Activated CD4-positive, alpha-beta memory T cell treated with anti-CD3 and anti-CD28 coated beads for 36 hours (primary cell): ENCODE measurements at regions of chr4 and their contacts with region 1.

Region 1: DNA sequence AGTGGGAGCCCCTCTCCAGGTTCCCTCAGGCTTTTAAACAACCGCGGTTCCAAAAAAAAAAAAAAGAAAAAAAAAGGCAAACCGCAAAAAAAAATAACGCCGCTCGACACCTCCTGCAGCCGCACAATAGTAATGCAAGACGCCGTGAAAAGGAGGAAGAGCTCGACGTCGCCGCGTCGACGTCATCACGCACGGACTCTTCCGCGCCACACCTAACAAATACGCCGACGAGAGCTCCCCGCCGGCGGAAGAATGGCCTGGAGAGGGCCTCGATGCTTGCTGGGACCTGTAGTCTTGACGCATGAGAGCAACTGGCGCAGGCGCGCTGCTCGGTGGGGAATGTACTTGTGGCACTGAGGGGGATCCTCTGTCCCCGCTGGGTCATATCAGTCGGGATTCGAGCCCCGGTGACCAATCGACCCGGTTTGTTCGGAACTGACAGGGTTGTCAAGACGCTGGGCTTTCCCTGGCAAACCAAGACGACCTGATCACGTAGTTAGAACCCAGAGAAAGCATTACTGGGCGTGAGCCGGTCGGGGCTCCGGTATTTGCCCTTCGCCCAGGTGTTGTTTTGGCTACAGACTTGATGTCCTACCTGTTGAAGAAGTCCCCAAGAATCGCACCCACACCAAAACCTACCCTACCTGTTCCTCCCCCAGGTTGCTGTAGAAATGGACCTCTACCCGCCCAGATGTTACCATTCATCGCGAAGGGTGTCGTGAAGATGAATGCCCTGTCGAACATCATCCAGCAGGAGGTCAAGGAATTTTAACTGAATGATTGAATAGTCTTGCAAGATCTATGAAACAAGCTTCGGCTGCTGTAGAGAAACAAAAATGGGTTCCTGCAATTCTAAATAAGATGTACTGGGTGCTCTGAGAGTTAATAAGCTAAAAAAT is at the start of gene CBR4:
- DNase-seq: peak; percentile 97
- H3K4me3 Mint-ChIP-seq: peak within 1 kb of the TSS; percentile 92
- H3K27ac Mint-ChIP-seq: peak within 1 kb of the TSS; percentile 86
- H3K4me1 Mint-ChIP-seq: peaks cover 20% of the 10 kb centered on the region
- H3K27me3 Mint-ChIP-seq: no peaks in the 10 kb centered on the region
- total RNA-seq, gene CBR4: 18.0 to 19.7 TPM

Region 2: DNA sequence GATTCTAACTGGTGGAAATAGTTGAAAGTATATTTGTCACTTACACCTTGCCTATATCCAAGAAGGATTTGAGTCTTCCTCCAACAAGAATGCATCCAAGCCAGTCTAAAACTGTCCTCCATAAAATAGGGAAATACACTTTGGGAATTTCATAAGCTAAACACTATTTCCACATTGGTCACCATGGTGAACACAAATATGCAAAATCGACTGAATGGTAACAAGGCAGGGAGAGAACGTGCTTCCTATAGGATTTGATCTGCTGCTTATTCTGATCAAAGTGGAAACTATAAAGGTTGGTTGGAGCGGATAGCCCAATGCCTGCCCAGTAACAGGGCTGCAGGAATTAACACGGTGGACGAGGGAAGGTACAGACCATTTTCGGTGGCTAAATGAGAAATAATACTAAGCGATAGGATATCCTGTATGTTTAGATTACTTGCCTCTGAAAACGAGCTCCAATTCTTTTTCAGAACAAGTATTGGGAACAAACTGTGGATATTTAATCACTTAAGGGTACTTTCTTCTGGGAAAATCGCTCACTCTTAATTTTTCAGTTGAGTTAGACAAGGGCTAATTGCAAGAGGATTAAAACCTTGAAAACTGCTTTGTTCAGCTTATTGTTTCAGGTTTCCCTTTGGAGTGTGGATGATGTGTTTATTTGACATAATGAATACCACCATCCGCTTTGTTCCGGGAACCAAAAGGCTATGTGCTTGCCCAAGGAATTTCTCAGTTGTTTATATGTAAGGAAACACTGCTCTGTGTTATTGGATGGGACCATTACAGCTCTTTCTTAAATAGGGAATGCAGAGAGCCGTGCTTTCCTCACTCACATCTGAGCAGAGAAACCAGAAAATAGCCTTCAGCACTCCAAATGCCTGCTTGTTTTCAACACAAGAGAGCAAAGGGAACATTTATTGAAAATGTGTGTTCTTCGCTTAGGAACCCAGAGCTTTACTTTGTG is 194.7 kb before region 1 on chr4:
- CTCF ChIA-PET with region 1: no interaction called
- POLR2A ChIA-PET with region 1: no interaction called
- intact Hi-C with region 1: no loop called
- DNase-seq: no peak
- H3K4me3 Mint-ChIP-seq: no peak overlapping the region
- H3K27ac Mint-ChIP-seq: no peak overlapping the region
- H3K4me1 Mint-ChIP-seq: peaks cover 10% of the 10 kb centered on the region
- H3K27me3 Mint-ChIP-seq: peaks cover 41% of the 10 kb centered on the region

Region 3: GRCh38 chr4:168886351-168886750 is 124.0 kb before region 1 on chr4:
- CTCF ChIA-PET with region 1: no interaction called
- POLR2A ChIA-PET with region 1: no interaction called
- intact Hi-C with region 1: no loop called
- DNase-seq: no peak
- H3K4me3 Mint-ChIP-seq: no peak overlapping the region
- H3K27ac Mint-ChIP-seq: no peak overlapping the region
- H3K4me1 Mint-ChIP-seq: no peaks in the 10 kb centered on the region
- H3K27me3 Mint-ChIP-seq: peaks cover 4% of the 10 kb centered on the region

Region 4: GRCh38 chr4:168923526-168924194 is 86.7 kb before region 1 on chr4:
- CTCF ChIA-PET with region 1: interaction called, 16 read pairs
- POLR2A ChIA-PET with region 1: no interaction called
- intact Hi-C with region 1: loop called (anchors 1 kb)
- DNase-seq: peak; percentile 52
- H3K4me3 Mint-ChIP-seq: no peak overlapping the region
- H3K27ac Mint-ChIP-seq: no peak overlapping the region
- H3K4me1 Mint-ChIP-seq: no peaks in the 10 kb centered on the region
- H3K27me3 Mint-ChIP-seq: no peaks in the 10 kb centered on the region

Region 5: DNA sequence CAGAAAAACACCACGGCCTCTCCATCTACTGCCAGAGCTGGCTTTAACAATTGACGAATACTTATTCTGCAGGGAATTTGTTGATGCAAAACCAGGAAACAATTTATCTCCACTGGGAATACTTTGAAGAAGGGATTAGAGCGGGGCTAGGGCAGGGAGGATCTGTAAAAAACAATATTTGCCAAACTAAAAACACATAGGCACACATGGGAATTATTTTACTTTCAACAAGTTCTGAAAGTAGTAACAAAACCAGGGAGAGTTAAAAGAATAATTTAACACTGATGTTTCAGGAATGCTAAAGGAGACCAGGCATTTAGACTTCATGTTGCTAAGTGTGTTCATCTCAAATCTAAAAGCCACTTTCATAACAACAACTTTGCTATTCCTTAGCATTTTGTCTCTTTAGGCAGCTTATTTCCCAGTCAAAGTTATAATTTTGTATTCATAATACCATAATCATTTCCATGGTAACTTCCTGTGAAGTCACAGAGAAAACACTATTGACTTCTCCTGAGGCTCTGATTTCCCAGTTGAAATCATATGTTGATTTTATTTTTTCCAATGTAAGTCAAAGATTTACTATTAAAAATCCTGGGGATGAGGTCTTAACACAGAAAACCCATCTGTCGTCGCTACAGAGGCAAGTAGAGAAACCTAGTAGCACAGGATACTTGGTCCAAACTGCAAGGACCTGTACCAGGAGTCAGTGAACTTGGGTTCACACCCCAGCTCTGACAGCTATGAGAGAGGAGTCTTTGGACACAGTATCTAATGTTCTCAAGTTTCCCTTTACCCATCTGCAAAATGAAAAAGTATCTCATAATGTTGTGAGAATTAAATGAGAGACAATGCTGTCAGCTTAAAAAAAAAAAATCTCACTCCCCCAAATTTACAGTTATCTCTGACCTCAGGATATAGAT is 191.1 kb after region 1 on chr4:
- CTCF ChIA-PET with region 1: no interaction called
- POLR2A ChIA-PET with region 1: no interaction called
- intact Hi-C with region 1: no loop called
- DNase-seq: no peak
- H3K4me3 Mint-ChIP-seq: no peak overlapping the region
- H3K27ac Mint-ChIP-seq: no peak overlapping the region
- H3K4me1 Mint-ChIP-seq: no peaks in the 10 kb centered on the region
- H3K27me3 Mint-ChIP-seq: no peaks in the 10 kb centered on the region

Region 6: GRCh38 chr4:169410839-169411770 is 400.7 kb after region 1 on chr4:
- CTCF ChIA-PET with region 1: no interaction called
- POLR2A ChIA-PET with region 1: no interaction called
- intact Hi-C with region 1: loop called (anchors 10 kb)
- DNase-seq: peak; percentile 76
- H3K4me3 Mint-ChIP-seq: no peak overlapping the region
- H3K27ac Mint-ChIP-seq: peak overlapping the region; percentile 58
- H3K4me1 Mint-ChIP-seq: peaks cover 24% of the 10 kb centered on the region
- H3K27me3 Mint-ChIP-seq: no peaks in the 10 kb centered on the region

Region 7: DNA sequence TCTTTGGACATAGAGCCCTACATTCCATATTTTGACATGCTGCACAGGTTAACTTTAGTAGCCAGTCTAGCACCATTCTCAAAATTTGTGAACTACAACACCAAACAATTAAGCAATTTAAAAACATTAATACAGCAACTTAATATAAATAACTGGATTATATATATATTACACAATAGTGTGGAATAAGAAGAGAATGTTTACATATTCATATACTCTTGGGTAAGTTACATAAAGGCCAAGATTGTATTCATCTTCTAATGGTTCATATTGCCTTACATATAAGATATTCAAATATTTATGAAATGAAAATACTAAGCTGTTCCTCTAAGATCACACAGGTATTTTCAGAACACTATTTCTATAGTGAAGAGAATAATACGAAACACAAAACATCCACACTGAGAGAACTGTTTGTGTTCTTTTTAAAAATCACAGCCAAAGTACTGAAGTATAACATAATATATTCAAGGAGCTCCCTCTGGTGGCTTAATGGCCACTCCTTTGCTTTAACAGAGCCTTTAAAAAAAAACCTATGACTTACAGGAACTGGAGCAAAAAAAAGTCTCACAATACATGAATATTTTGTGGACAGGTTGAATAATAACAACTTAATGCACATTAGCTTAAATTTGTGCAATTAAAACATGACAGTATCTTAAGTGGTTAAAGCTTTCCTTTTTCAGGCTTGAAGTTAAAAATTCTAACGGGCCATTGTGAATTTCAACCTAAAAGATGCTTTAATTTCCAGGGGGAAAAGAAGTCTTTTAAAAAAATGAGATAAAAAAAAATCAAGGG is 555.8 kb after region 1 on chr4:
- CTCF ChIA-PET with region 1: no interaction called
- POLR2A ChIA-PET with region 1: no interaction called
- intact Hi-C with region 1: loop called (anchors 10 kb)
- DNase-seq: no peak
- H3K4me3 Mint-ChIP-seq: no peak overlapping the region
- H3K27ac Mint-ChIP-seq: no peak overlapping the region
- H3K4me1 Mint-ChIP-seq: peaks cover 5% of the 10 kb centered on the region
- H3K27me3 Mint-ChIP-seq: no peaks in the 10 kb centered on the region

Region 8: GRCh38 chr4:170027181-170027829 is 1016.9 kb after region 1 on chr4:
- CTCF ChIA-PET with region 1: no interaction called
- POLR2A ChIA-PET with region 1: no interaction called
- intact Hi-C with region 1: loop called (anchors 1 kb)
- DNase-seq: peak; percentile 93
- H3K4me3 Mint-ChIP-seq: peak overlapping the region; percentile 79
- H3K27ac Mint-ChIP-seq: peak overlapping the region; percentile 71
- H3K4me1 Mint-ChIP-seq: peaks cover 9% of the 10 kb centered on the region
- H3K27me3 Mint-ChIP-seq: peaks cover 16% of the 10 kb centered on the region